ENCODE measurements at regions of chr2 and their contacts with region 1.

Region 1: GRCh38 chr2:170815746-170816503 is 762 bp upstream of the GAD1 start:
- DNase-seq: peak; percentile 81 to 89
- H3K4me3 ChIP-seq: peak overlapping the region; percentile 76
- H3K4me3 Mint-ChIP-seq: peak overlapping the region; percentile 95
- H3K27ac Mint-ChIP-seq: no peak overlapping the region
- H3K4me1 ChIP-seq: peaks cover 7% of the 10 kb centered on the region; the same call in 1 of the 2 replicates
- H3K4me1 Mint-ChIP-seq: peaks cover 7% of the 10 kb centered on the region
- H3K27me3 ChIP-seq: no peaks in the 10 kb centered on the region
- H3K27me3 Mint-ChIP-seq: peaks cover 8% of the 10 kb centered on the region
- CTCF ChIP-seq: peak; percentile 90 to 93

Region 2: GRCh38 chr2:170235860-170236679 is 579.9 kb before region 1 on chr2:
- CTCF ChIA-PET with region 1: interaction called, 4 read pairs
- POLR2A ChIA-PET with region 1: no interaction called
- intact Hi-C with region 1: loop called (anchors 1 kb)
- DNase-seq: peak; percentile 46 to 82
- H3K4me3 ChIP-seq: no peak overlapping the region
- H3K4me3 Mint-ChIP-seq: no peak overlapping the region
- H3K27ac Mint-ChIP-seq: no peak overlapping the region
- H3K4me1 ChIP-seq: peaks cover 12% of the 10 kb centered on the region; the same call in 1 of the 2 replicates
- H3K4me1 Mint-ChIP-seq: peaks cover 31% of the 10 kb centered on the region
- H3K27me3 ChIP-seq: no peaks in the 10 kb centered on the region
- H3K27me3 Mint-ChIP-seq: no peaks in the 10 kb centered on the region
- CTCF ChIP-seq: peak; percentile 68 to 79

Region 3: GRCh38 chr2:170369894-170370293 is 446.0 kb before region 1 on chr2:
- CTCF ChIA-PET with region 1: interaction called, 8 read pairs
- POLR2A ChIA-PET with region 1: no interaction called
- intact Hi-C with region 1: loop called (anchors 1 kb)
- DNase-seq: peak in 1 of 2 experiments; percentile 45
- H3K4me3 ChIP-seq: no peak overlapping the region
- H3K4me3 Mint-ChIP-seq: no peak overlapping the region
- H3K27ac Mint-ChIP-seq: no peak overlapping the region
- H3K4me1 ChIP-seq: no peaks in the 10 kb centered on the region
- H3K4me1 Mint-ChIP-seq: no peaks in the 10 kb centered on the region
- H3K27me3 ChIP-seq: no peaks in the 10 kb centered on the region
- H3K27me3 Mint-ChIP-seq: peaks cover 7% of the 10 kb centered on the region
- CTCF ChIP-seq: peak; percentile 21 to 26

Region 4: DNA sequence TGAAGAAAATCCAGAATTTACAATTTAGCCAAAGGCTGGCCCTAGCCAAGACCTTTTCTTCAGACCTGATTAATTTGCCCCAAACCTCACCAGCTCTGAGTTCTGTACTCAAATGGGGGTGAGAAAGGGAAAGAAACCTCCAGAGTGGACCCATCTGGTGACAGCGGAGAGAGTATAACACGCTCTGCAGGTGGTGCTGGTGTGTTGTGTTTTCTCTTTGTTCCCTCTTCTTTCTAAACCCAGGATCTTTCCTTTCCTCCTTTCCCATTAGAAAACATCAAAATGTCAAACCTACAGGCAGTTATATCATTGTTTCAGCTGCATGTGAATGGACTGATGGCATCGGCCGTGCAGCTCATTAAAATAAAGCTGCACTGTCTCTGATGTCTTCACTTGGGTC is 354.0 kb before region 1 on chr2:
- CTCF ChIA-PET with region 1: interaction called, 8 read pairs
- POLR2A ChIA-PET with region 1: no interaction called
- intact Hi-C with region 1: loop called (anchors 1 kb)
- DNase-seq: no peak
- H3K4me3 ChIP-seq: no peak overlapping the region
- H3K4me3 Mint-ChIP-seq: no peak overlapping the region
- H3K27ac Mint-ChIP-seq: peak overlapping the region; percentile 14
- H3K4me1 ChIP-seq: peaks cover 3% of the 10 kb centered on the region
- H3K4me1 Mint-ChIP-seq: peaks cover 15% of the 10 kb centered on the region
- H3K27me3 ChIP-seq: no peaks in the 10 kb centered on the region
- H3K27me3 Mint-ChIP-seq: no peaks in the 10 kb centered on the region
- CTCF ChIP-seq: peak; percentile 19 to 25

Region 5: DNA sequence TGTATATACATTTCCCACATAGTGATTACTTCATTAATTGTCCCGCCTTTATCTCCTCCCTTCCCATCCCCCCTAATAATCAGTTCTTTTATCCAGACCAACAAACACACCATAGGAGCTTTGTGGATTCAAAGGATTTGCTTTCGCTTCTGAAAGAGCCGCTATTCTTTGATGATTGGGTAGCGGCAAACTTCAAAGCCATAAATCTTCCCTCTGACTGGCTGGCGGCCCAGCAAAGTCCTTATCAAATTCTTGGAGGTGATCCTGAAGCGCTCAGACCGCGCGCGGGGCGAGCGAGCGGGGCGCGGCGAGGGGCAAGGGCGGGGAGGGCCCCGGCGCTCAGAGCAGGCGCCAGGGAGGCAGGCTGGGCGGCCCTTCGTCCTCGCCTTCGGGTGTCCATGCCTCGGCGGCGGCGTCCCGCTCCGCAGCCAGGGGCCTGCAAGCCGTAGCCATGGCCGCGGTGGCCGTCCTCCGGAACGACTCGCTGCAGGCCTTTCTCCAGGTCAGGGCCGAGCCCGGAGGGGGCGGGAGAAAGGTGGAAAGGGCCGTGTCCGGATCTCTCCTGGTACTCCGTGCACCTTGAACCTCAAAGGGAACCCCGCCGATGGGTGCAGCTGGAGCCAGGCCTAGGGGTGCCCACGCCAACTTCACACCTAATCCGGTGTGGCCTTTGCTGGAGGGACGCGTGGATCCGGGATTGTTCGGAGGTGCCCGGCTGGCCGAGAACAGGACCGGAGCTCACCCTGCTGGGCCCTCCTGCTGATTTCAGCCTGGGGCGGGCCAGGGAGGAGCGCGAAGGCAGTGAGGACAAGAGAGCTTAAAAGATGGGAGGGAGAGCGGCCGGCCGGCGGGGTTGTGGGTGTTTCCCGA is 100.6 kb before region 1 on chr2 and contains the start of gene SP5:
- CTCF ChIA-PET with region 1: interaction called, 12 read pairs
- POLR2A ChIA-PET with region 1: interaction called, 4 read pairs
- intact Hi-C with region 1: loop called (anchors 1 kb)
- DNase-seq: peak; percentile 95
- H3K4me3 ChIP-seq: peak within 1 kb of the TSS; percentile 62
- H3K4me3 Mint-ChIP-seq: peak within 1 kb of the TSS; percentile 100
- H3K27ac Mint-ChIP-seq: peak within 1 kb of the TSS; percentile 84
- H3K4me1 ChIP-seq: peaks cover 15% of the 10 kb centered on the region; the same call in 1 of the 2 replicates
- H3K4me1 Mint-ChIP-seq: peaks cover 6% of the 10 kb centered on the region
- H3K27me3 ChIP-seq: no peaks in the 10 kb centered on the region
- H3K27me3 Mint-ChIP-seq: no peaks in the 10 kb centered on the region
- CTCF ChIP-seq: peak in 1 of 2 experiments; percentile 14
- total RNA-seq, gene SP5: 149 and 161 TPM in 2 replicates

Region 6: GRCh38 chr2:170747921-170748320 is 68.0 kb before region 1 on chr2:
- CTCF ChIA-PET with region 1: no interaction called
- POLR2A ChIA-PET with region 1: no interaction called
- intact Hi-C with region 1: no loop called
- DNase-seq: no peak
- H3K4me3 ChIP-seq: no peak overlapping the region
- H3K4me3 Mint-ChIP-seq: no peak overlapping the region
- H3K27ac Mint-ChIP-seq: no peak overlapping the region
- H3K4me1 ChIP-seq: peaks cover 16% of the 10 kb centered on the region
- H3K4me1 Mint-ChIP-seq: peaks cover 6% of the 10 kb centered on the region
- H3K27me3 ChIP-seq: no peaks in the 10 kb centered on the region
- H3K27me3 Mint-ChIP-seq: no peaks in the 10 kb centered on the region
- CTCF ChIP-seq: no peak

Region 7: GRCh38 chr2:170873035-170873692 is 57.2 kb after region 1 on chr2:
- CTCF ChIA-PET with region 1: interaction called, 10 read pairs
- POLR2A ChIA-PET with region 1: no interaction called
- intact Hi-C with region 1: loop called (anchors 1 kb)
- DNase-seq: peak; percentile 79 to 85
- H3K4me3 ChIP-seq: no peak overlapping the region
- H3K4me3 Mint-ChIP-seq: peak overlapping the region; percentile 64
- H3K27ac Mint-ChIP-seq: peak overlapping the region; percentile 68
- H3K4me1 ChIP-seq: no peaks in the 10 kb centered on the region
- H3K4me1 Mint-ChIP-seq: peaks cover 11% of the 10 kb centered on the region
- H3K27me3 ChIP-seq: no peaks in the 10 kb centered on the region; the same call in 1 of the 2 replicates
- H3K27me3 Mint-ChIP-seq: peaks cover 12% of the 10 kb centered on the region
- CTCF ChIP-seq: peak; percentile 92 to 96